Adrenal gland (tissue), 19 donors: ENCODE measurements at regions of chr7 and their contacts with region 1.

Region 1: DNA sequence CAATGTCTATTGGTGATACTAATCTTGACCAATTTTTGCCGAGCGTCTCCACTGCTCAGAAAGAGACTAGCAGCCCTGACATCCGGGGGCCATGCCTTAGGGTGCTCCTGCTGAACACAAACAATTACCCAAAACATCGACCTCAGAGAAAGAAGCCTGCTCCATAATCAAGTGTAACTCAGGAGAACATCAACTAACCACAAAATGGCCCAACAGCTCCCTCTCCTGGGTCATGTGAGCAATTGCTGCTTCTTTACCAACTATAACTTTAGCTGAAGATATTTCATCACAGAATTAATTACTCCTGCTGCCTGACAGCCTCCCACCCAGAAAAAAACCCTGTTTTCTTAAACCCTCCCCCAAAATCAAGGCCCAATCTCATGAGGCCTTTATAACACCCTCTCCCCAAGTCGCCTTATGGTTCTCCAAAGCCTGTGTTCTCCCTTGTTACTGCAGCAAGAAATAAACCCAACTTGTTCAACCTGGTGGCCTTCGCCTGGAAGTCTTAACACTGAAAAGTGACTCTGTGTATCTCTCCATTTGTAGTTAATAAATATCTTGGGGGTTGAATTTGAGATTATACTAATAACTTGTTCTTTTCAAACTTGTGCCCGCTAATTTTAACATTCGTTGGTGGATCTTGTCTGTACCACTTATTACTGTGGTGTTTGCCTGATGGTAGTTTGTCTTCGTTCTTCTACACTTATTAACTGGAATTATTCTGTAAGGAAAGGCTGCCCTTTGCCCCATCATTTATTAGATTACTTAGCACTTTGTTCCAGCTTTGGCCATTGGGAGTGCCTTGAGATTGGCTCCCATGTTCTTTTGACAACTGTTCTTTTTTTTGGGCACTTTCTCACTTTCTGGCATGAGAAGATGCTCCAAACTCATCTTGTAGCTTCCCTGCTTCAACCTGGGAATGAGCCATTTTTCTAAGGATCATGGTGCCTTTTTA is 21.2 kb upstream of the RAMP3 start:
- DNase-seq: peak; percentile 41 to 78 (median 62)
- H3K4me3 ChIP-seq: no peak overlapping the region
- H3K27ac ChIP-seq: no peak overlapping the region
- H3K4me1 ChIP-seq: no peaks in the 10 kb centered on the region
- H3K27me3 ChIP-seq: no peaks in the 10 kb centered on the region
- CTCF ChIP-seq: peak; percentile 76 to 93 (median 89)
- POLR2A ChIP-seq: no peak

Region 2: GRCh38 chr7:44858161-44858560 is 278.2 kb before region 1 on chr7:
- intact Hi-C with region 1: loop called in 1 of 2 experiments (anchors 5 kb)
- DNase-seq: no peak
- H3K4me3 ChIP-seq: no peak overlapping the region
- H3K27ac ChIP-seq: no peak overlapping the region
- H3K4me1 ChIP-seq: no peaks in the 10 kb centered on the region
- H3K27me3 ChIP-seq: no peaks in the 10 kb centered on the region
- CTCF ChIP-seq: peak in 4 of 6 experiments; percentile 7 to 23 (median 18)
- POLR2A ChIP-seq: no peak

Region 3: GRCh38 chr7:44881610-44882009 is 254.8 kb before region 1 on chr7:
- intact Hi-C with region 1: no loop called
- DNase-seq: no peak
- H3K4me3 ChIP-seq: peak overlapping the region in 1 of 4 donors; percentile 26
- H3K27ac ChIP-seq: peak overlapping the region in 1 of 5 donors; percentile 38
- H3K4me1 ChIP-seq: peaks cover 25 to 69% of the 10 kb centered on the region in 2 donors
- H3K27me3 ChIP-seq: no peaks in the 10 kb centered on the region
- CTCF ChIP-seq: no peak
- POLR2A ChIP-seq: no peak

Region 4: GRCh38 chr7:44973610-44974401 is 162.6 kb before region 1 on chr7:
- intact Hi-C with region 1: loop called (anchors 2 to 5 kb)
- DNase-seq: peak in 6 of 7 donors; percentile 67 to 87 (median 80)
- H3K4me3 ChIP-seq: no peak overlapping the region
- H3K27ac ChIP-seq: no peak overlapping the region
- H3K4me1 ChIP-seq: no peaks in the 10 kb centered on the region
- H3K27me3 ChIP-seq: no peaks in the 10 kb centered on the region
- CTCF ChIP-seq: peak; percentile 60 to 79 (median 74)
- POLR2A ChIP-seq: no peak

Region 5: DNA sequence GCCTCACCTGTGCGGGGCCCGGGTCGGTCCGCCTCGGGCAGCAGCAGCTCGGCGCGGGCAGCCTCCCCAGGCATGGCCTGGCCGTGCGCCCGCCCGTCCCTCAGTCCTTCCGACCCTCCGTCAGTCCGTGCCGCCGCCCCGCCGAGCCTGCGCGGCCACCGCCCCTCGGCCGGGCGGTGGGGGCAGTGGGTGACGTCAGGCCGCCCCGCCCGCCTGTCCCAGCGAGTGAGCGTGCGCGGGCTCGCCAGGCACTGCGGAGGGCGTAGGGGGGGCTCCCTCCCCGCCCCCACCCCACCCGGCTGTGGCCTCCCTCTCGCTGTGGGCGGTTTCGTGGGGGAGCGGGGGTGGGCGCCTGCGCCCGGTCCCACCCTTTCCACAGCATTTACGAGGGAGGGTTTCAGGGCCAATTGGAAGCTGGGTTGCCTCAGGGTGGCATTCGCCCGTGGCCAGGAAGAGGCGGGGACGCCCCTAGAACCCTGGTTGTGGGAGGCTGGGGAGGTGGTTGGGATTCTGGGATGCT is 47.5 kb before region 1 on chr7 and contains the start of gene NACAD:
- intact Hi-C with region 1: no loop called
- DNase-seq: peak in 3 of 7 donors; percentile 15 to 58 (median 25)
- H3K4me3 ChIP-seq: peak within 1 kb of the TSS in 2 of 4 donors; percentile 12 to 69
- H3K27ac ChIP-seq: peak within 1 kb of the TSS in 2 of 5 donors; percentile 14 to 71
- H3K4me1 ChIP-seq: peaks cover 0 to 8% of the 10 kb centered on the region in 2 donors
- H3K27me3 ChIP-seq: no peaks in the 10 kb centered on the region
- CTCF ChIP-seq: no peak
- POLR2A ChIP-seq: no peak
- total RNA-seq, gene NACAD: 0.93 to 8.4 (median 1.7) TPM